CD8-positive, alpha-beta memory T cell (primary cell): ENCODE measurements at regions of chr5 and their contacts with region 1.

Region 1: DNA sequence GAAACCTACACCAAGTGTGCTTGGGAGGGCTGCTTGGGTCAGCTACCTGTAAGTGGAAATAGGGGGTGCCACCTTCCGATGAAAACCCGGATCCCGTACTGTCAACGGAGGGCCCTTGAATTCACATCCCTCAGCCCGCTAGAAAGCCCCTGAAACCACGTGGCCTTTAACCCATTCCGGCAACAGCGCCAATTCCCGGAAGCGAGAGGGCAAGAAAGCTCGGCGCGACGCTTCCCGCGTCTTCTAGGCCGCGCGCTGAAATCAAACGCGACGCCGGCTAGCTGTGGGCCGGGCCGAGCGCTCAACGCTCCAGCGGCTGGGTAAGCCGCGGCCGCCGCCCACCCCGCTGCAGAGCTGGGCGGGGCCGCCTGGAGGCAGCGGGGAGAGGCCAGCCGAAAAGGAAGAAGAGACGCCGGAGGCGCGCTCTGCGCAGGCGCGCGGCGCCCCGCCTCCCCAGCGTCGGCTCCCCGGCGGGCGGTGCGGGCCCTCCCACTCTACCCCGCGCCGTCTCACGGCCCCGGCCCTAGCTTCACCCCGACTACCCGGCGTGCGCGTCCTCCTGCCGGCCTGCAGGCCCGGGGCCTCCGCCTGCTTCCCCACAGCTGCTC is at the start of gene KIF2A:
- DNase-seq: peak; percentile 86 to 96 (median 94)
- H3K4me3 ChIP-seq: peak within 1 kb of the TSS; percentile 82
- H3K4me3 Mint-ChIP-seq: peak within 1 kb of the TSS; percentile 97 to 100 (median 98)
- H3K27ac ChIP-seq: peak within 1 kb of the TSS; percentile 80
- H3K27ac Mint-ChIP-seq: peak within 1 kb of the TSS; percentile 95 to 99 (median 98)
- H3K4me1 ChIP-seq: peaks cover 44% of the 10 kb centered on the region
- H3K4me1 Mint-ChIP-seq: peaks cover 46 to 62% (median 56%) of the 10 kb centered on the region in 3 donors
- H3K27me3 ChIP-seq: no peaks in the 10 kb centered on the region
- H3K27me3 Mint-ChIP-seq: peaks cover 0 to 2% of the 10 kb centered on the region in 2 donors
- total RNA-seq, gene KIF2A: 252 to 253 TPM

Region 2: DNA sequence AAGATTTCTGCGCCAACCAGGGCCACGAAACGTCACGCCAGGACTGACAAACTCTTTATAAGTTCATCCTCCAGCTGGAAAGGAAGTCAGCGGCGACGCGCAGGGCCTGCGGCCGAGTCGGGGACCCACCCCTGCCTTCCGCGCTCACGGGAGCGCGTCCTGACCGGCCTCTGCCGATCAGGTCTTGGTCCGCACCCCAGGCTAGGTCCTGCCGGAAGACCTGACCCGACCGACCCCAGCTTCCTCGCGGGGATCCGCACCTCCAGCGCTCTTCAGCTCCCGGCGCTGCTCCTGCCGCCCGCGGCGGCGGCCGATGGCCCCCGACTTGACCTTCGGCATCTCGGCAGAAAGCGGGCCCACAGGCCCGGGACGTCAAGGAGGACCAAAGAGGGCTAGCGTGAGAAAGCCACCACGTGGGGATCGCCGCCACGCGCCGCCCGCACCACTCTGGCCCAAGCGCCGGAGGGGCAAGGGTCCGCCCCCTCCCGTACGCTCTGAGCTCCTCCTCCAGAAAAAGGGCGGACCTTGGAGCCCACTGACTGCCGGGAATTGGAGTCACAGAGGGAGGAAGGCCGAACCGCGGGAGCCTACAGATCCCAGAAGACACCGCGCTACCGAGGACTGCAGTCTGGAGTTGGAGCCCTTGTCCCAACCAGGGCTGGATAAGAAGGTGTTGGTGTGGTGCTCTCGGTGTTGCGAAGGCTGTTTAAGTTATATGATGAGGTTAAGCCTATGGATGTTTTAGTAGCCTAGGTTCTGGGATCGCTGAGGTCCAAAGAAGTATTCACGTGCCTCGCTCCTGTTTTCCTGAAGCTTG is 97.8 kb after region 1 on chr5 and contains the start of gene DIMT1:
- CTCF ChIA-PET with region 1: interaction called, 8 read pairs
- POLR2A ChIA-PET with region 1: interaction called, 10 read pairs
- DNase-seq: peak; percentile 87 to 94 (median 89)
- H3K4me3 ChIP-seq: peak within 1 kb of the TSS; percentile 85
- H3K4me3 Mint-ChIP-seq: peak within 1 kb of the TSS; percentile 96 to 100 (median 99)
- H3K27ac ChIP-seq: peak within 1 kb of the TSS; percentile 95
- H3K27ac Mint-ChIP-seq: peak within 1 kb of the TSS; percentile 88 to 99 (median 97)
- H3K4me1 ChIP-seq: peaks cover 14% of the 10 kb centered on the region
- H3K4me1 Mint-ChIP-seq: peaks cover 23 to 32% (median 30%) of the 10 kb centered on the region in 3 donors
- H3K27me3 ChIP-seq: no peaks in the 10 kb centered on the region
- H3K27me3 Mint-ChIP-seq: no peaks in the 10 kb centered on the region
- total RNA-seq, gene DIMT1: 54.4 to 58.9 TPM